CD14-positive monocyte (primary cell): ENCODE measurements at regions of chr19 and their contacts with region 1.

Region 1: GRCh38 chr19:1241417-1242095 is at the start of gene ATP5F1D:
- DNase-seq: peak; percentile 91 to 95 (median 95)
- H3K4me3 ChIP-seq: peak within 1 kb of the TSS; percentile 53 to 89 (median 54)
- H3K4me3 Mint-ChIP-seq: peak within 1 kb of the TSS; percentile 77 to 90
- H3K27ac ChIP-seq: peak within 1 kb of the TSS in 1 of 2 donors; percentile 74
- H3K27ac Mint-ChIP-seq: peak within 1 kb of the TSS; percentile 79 to 96 (median 90)
- H3K4me1 ChIP-seq: peaks cover 60 to 86% of the 10 kb centered on the region in 2 donors
- H3K4me1 Mint-ChIP-seq: peaks cover 49% of the 10 kb centered on the region
- H3K27me3 ChIP-seq: peaks cover 5 to 28% of the 10 kb centered on the region in 2 donors
- H3K27me3 Mint-ChIP-seq: peaks cover 22 to 33% (median 25%) of the 10 kb centered on the region in 3 donors
- CTCF ChIP-seq: no peak
- polyA plus RNA-seq, gene ATP5F1D: 122 to 160 (median 143) TPM

Region 2: GRCh38 chr19:1113033-1113985 is 128.2 kb before region 1 on chr19:
- intact Hi-C with region 1: loop called (anchors 5 to 10 kb)
- DNase-seq: peak; percentile 83 to 90 (median 87)
- H3K4me3 ChIP-seq: no peak overlapping the region
- H3K4me3 Mint-ChIP-seq: no peak overlapping the region
- H3K27ac ChIP-seq: peak overlapping the region; percentile 2 to 43
- H3K27ac Mint-ChIP-seq: peak overlapping the region in 6 of 7 donors; percentile 10 to 64 (median 43)
- H3K4me1 ChIP-seq: peaks cover 8 to 14% of the 10 kb centered on the region in 2 donors
- H3K4me1 Mint-ChIP-seq: peaks cover 8% of the 10 kb centered on the region
- H3K27me3 ChIP-seq: no peaks in the 10 kb centered on the region
- H3K27me3 Mint-ChIP-seq: peaks cover 0 to 2% (median 0%) of the 10 kb centered on the region in 3 donors
- CTCF ChIP-seq: peak; percentile 98

Region 3: DNA sequence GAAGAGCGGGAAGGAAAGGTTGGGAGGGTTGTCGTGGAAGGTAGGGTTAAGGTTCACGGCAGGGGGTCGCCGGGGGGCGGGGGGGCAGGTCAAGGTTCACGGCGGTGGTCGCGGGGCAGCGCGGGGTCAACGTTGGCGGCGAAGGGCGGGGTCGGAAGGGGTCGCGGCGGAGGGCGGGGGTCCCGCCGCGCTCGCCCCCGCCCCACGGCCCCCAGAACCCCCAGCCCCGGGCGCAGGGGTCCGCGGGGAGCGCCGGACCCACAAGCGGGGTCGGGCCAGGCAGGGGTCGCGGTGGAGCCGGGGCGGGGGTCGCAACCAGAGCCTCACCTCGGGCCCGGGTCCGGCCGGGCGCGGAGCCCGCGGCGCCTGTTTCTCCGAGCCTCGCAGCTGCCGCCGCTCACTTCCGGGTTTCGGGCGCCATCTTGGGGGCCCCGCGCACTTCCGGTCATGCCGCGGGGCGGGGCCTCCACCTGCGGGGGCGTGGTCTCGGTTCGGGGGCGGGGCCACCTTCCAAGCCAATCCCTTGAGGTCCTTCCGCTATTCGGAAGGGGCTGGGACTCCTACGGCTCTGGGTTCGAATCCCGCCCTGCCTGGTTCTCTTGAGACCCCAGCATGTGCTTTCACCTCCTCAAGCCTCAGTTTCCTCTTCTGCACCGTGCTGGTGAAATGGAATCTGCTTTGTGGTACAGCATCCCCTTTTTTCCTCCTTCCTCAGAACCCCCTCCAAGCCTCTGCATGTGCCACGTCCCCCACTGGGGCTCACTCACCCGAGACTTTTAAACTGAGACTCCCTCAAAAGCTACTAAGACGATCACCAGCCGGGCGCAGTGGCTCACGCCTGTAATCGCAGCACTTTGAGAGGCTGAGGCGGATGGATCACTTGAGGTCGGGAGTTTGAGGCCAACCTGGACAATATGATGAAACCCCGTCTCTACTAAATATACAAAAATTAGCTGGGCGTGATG is 67.4 kb before region 1 on chr19 and contains the start of gene SBNO2:
- intact Hi-C with region 1: no loop called
- DNase-seq: peak; percentile 76 to 88 (median 87)
- H3K4me3 ChIP-seq: peak within 1 kb of the TSS; percentile 59 to 99 (median 69)
- H3K4me3 Mint-ChIP-seq: peak within 1 kb of the TSS; percentile 94 to 95
- H3K27ac ChIP-seq: peak within 1 kb of the TSS; percentile 53 to 89
- H3K27ac Mint-ChIP-seq: peak within 1 kb of the TSS; percentile 91 to 97 (median 95)
- H3K4me1 ChIP-seq: peaks cover 77 to 90% of the 10 kb centered on the region in 2 donors
- H3K4me1 Mint-ChIP-seq: peaks cover 75% of the 10 kb centered on the region
- H3K27me3 ChIP-seq: no peaks in the 10 kb centered on the region
- H3K27me3 Mint-ChIP-seq: peaks cover 0 to 3% (median 0%) of the 10 kb centered on the region in 3 donors
- CTCF ChIP-seq: no peak
- polyA plus RNA-seq, gene SBNO2: 0.71 to 75.0 (median 2.6) TPM

Region 4: DNA sequence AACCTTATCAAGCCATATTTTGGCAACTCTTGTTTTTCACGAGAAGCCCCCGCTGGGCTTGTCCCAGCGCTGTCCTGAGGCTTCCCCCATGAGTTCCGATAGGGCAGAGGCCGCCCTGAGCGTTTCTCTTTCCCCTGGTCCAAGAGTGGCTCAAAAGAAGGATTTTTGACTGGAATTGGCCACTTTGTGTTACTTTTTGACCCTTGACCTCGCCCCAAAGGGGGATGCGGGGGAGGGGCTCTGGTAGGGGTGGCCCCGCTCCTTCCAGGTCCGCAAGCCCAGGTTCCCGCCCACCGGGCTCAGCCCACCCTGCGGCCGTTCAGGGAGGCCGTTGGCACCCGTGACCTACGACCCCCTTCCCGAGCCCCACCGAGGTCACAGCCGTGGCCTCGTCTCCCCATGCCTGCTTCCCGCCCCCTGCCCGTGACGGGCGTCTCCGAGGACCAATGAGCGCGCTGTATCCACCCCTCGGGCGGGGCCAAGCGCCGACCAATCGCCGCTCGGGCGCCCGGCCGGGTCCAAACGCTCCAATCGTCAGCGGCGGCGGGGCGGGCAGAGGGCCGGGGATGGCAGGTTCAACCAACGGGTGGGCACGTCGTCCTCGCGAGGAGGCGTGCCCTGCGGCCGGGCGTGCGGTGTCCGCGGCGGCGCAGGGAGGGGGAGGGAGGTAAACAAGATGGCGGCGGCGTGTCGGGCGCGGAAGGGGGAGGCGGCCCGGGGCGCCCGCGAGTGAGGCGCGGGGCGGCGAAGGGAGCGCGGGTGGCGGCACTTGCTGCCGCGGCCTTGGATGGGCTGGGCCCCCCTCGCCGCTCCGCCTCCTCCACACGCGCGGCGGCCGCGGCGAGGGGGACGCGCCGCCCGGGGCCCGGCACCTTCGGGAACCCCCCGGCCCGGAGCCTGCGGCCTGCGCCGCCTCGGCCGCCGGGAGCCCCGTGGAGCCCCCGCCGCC is 36.2 kb before region 1 on chr19 and contains the start of gene STK11:
- intact Hi-C with region 1: loop called in 1 of 2 experiments (anchors 5 kb)
- DNase-seq: peak; percentile 96 to 97 (median 96)
- H3K4me3 ChIP-seq: peak within 1 kb of the TSS; percentile 73 to 96 (median 87)
- H3K4me3 Mint-ChIP-seq: peak within 1 kb of the TSS; percentile 97
- H3K27ac ChIP-seq: peak within 1 kb of the TSS; percentile 51 to 83
- H3K27ac Mint-ChIP-seq: peak within 1 kb of the TSS; percentile 89 to 93 (median 92)
- H3K4me1 ChIP-seq: peaks cover 36 to 49% of the 10 kb centered on the region in 2 donors
- H3K4me1 Mint-ChIP-seq: peaks cover 40% of the 10 kb centered on the region
- H3K27me3 ChIP-seq: no peaks in the 10 kb centered on the region
- H3K27me3 Mint-ChIP-seq: peaks cover 0 to 4% (median 1%) of the 10 kb centered on the region in 3 donors
- CTCF ChIP-seq: no peak
- polyA plus RNA-seq, gene STK11: 6.2 to 72.1 (median 15.4) TPM

Region 5: GRCh38 chr19:1269065-1269477 is 27.5 kb after region 1 on chr19 and contains the start of gene CIRBP:
- intact Hi-C with region 1: loop called (anchors 1 kb)
- DNase-seq: peak; percentile 99 to 100 (median 99)
- H3K4me3 ChIP-seq: peak within 1 kb of the TSS; percentile 76 to 98 (median 87)
- H3K4me3 Mint-ChIP-seq: peak within 1 kb of the TSS; percentile 82 to 89
- H3K27ac ChIP-seq: peak within 1 kb of the TSS; percentile 73 to 87
- H3K27ac Mint-ChIP-seq: peak within 1 kb of the TSS; percentile 84 to 94 (median 91)
- H3K4me1 ChIP-seq: peaks cover 76 to 88% of the 10 kb centered on the region in 2 donors
- H3K4me1 Mint-ChIP-seq: peaks cover 72% of the 10 kb centered on the region
- H3K27me3 ChIP-seq: peaks cover 0 to 8% of the 10 kb centered on the region in 2 donors
- H3K27me3 Mint-ChIP-seq: peaks cover 6 to 14% (median 9%) of the 10 kb centered on the region in 3 donors
- CTCF ChIP-seq: no peak
- polyA plus RNA-seq, gene CIRBP: 39.6 to 600 (median 51.1) TPM

Region 6: DNA sequence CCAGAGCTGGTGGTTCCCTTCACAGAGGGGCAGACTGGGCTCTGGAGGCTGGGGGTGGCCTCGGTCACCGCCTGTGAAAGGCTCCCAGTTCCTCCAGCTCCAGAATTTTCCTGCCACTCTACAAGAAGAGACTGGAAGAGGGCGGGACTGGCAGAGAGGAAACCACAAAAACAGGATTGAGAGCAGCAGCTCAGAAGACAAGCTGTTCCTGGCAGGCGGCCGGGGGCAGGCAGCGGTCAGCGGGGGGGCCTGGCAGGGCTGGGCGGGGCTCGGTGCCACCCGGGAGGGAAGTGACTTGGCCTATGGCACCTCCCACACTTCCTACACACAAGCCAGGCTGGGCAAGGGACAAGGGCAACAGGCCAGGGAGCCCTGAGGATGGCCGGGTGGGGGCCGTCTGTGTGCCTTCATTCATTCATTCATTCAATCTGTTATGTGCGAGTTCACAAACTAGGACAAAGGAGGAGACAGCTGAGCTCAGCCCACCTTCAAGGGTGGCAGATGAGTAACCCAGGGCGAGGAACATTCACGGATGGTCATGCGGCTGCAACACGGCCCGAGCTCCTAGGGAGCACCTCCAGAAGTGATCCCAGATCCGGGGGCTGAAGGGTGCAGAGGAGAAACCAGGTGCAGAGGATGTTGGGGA is 790.9 kb after region 1 on chr19:
- intact Hi-C with region 1: no loop called
- DNase-seq: peak; percentile 74 to 81 (median 78)
- H3K4me3 ChIP-seq: peak overlapping the region; percentile 20 to 65 (median 28)
- H3K4me3 Mint-ChIP-seq: peak overlapping the region; percentile 74 to 95
- H3K27ac ChIP-seq: peak overlapping the region; percentile 45 to 72
- H3K27ac Mint-ChIP-seq: peak overlapping the region; percentile 86 to 98 (median 95)
- H3K4me1 ChIP-seq: peaks cover 39 to 57% of the 10 kb centered on the region in 2 donors
- H3K4me1 Mint-ChIP-seq: peaks cover 41% of the 10 kb centered on the region
- H3K27me3 ChIP-seq: no peaks in the 10 kb centered on the region
- H3K27me3 Mint-ChIP-seq: peaks cover 2 to 5% (median 3%) of the 10 kb centered on the region in 3 donors
- CTCF ChIP-seq: no peak